Left colon (tissue), 2 donors: ENCODE measurements at regions of chr4 and their contacts with region 1.

Region 1: DNA sequence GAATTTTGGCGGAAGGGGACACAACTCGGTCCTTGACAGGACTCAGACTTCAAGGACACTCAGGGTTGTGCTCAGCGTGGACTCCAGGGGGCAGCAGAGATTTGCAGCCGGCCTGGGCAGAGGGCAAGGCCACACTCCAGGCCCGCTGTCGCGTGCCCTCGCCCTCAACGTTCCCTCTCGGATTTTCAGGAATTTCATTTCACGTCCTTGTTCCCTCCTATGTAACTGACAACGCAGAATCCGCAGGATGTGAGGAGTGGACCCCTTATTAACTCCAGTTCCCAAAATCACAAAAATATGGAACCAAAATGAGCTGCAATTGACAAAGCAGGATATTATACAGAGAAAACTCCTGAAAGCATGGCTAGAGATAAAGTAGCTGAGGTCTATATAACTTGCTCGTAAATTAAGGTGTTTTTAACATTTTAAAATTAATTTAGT is 21.0 kb upstream of the DCTD start:
- DNase-seq: peak; percentile 47 to 69
- ATAC-seq: peak; percentile 99

Region 2: DNA sequence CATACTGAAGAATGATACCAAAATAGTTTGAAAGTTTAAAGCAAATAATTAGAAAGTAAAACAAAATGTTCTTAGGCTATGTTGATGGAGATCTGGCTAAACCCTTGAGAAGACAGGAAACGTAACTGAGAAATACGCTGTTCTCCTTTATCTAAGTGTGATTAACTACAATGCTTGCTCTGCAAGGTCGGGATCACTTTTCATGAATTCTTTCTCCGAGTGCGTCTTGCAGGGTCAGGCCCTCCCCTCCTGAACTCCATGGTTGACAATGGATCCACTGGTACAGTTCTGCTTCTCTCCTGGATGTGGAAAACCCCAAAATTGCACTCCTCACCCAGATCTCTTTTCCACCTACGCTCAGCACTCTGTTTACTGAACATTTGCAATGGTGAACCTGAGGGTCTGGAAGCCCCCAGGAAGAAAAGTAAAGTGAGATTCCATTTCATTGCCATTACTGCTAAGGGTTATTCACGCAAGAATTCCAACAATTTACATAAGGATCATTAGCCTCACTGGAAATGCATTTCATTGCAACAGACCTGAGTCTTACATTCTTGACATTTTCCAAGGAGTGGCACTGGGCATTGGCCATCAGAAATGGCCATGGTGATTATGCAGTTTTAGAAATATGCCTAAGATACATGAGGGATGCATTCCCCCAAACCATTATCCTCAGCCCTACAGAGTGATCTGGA is 136.2 kb after region 1 on chr4:
- intact Hi-C with region 1: loop called in 1 of 2 experiments (anchors 10 kb)
- DNase-seq: no peak
- ATAC-seq: no peak

Region 3: GRCh38 chr4:183256756-183257385 is 318.6 kb after region 1 on chr4:
- intact Hi-C with region 1: loop called (anchors 5 to 10 kb)
- DNase-seq: peak; percentile 41 to 66
- ATAC-seq: peak; percentile 35

Region 4: DNA sequence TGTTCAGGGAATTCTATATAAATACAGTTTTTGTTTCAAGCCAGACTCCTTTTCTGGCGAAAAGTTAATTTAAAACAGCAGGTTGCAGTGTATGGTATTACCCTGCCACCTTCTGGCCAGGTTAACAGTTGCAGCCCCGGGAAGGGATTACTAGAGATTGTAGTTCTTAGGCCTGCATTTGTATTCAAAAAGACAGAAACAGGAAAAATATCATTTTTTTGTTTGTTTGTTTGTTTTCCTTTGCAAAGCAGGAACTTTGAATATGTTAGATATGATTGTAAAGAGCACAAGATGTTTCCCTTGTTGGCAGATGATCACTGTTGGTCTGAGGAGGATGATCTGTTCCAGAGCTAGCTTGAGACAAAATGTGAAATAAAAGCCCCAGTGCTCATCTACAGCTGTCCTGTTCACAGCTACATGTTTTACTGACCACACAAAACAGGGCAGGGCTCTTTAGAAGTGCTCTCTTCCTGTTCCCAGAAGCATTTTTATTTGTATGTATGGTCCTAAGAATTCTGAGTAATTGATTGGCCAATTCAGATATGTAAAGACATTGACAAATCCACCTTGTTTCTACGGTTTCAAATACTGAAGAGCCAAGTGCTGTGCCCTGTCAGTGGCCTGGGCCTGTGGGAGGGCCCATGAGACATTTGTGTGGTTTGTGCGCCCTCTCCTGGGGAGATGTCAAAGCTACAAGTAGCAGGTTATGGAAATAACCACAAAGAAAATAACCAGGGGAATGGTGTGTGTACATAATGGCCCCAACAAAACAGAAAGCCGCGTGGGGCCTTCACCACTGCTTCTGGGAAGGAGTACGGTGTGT is 323.9 kb after region 1 on chr4:
- intact Hi-C with region 1: loop called (anchors 5 to 10 kb)
- DNase-seq: peak; percentile 72 to 85
- ATAC-seq: peak; percentile 87